ENCODE measurements at regions of chr7 and their contacts with region 1.

Region 1: DNA sequence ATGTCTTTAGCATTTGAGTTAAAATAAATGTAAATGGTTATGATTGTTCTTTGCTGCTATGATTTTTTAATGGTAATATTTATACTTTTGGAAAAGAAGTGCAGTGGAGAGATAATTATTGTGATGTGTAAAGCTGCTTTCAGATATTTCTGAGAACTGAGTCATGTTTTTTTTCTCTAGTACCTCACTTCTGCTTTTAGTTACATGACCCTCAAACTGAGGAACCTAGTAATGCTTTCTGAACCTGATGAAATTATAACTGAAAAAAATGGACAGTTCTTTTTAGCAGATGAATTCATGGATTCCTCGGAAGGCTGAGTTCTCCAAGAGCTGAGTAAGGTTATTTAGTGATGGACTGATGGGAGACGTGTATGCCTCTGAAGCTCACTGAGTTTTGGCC is 167.8 kb downstream of the CDCA7L start:
- DNase-seq: no peak
- H3K4me3 Mint-ChIP-seq: no peak overlapping the region
- H3K27ac Mint-ChIP-seq: no peak overlapping the region
- H3K4me1 Mint-ChIP-seq: no peaks in the 10 kb centered on the region
- H3K27me3 Mint-ChIP-seq: peaks cover 4% of the 10 kb centered on the region

Region 2: DNA sequence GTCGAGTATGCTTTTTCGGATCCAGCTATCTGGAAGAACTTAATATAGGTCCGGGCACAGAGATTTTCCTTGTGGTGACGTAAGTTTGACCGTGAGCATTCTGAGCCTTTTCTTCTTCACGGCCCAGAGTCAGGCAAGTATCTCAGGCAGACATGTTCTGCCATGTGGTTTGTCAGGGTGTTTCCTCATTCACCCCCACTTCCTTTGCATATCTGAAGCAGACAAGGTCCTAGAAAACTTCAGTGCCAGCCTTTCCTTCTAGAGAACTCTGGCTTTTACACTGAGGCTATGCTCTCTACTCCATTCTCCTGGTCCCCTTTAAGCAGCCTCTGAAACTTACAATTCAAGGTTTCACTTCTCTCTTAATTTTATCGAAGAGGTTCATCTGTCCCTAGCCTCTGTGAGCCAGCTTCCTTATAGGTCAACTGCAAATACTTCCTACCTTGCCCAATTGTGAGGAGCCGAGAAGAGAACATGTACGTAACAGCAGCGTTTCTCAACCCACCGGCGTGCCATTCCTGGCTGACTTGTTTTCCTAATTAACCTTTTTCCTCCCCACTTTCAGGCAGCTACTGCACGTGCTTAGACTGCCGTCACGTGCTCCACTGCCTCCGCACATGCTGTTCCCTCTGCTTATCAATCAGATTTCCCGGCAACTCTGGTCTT is 120.5 kb after region 1 on chr7:
- CTCF ChIA-PET with region 1: no interaction called
- POLR2A ChIA-PET with region 1: no interaction called
- intact Hi-C with region 1: loop called (anchors 5 kb)
- DNase-seq: peak; percentile 13
- H3K4me3 Mint-ChIP-seq: peak overlapping the region; percentile 47
- H3K27ac Mint-ChIP-seq: peak overlapping the region; percentile 69
- H3K4me1 Mint-ChIP-seq: peaks cover 18% of the 10 kb centered on the region
- H3K27me3 Mint-ChIP-seq: no peaks in the 10 kb centered on the region

Measured in activated CD4-positive, alpha-beta memory T cell treated with anti-CD3 and anti-CD28 coated beads for 36 hours (primary cell).